Calu3 (cell line): ENCODE measurements at regions of chr1 and their contacts with region 1.

Region 1: DNA sequence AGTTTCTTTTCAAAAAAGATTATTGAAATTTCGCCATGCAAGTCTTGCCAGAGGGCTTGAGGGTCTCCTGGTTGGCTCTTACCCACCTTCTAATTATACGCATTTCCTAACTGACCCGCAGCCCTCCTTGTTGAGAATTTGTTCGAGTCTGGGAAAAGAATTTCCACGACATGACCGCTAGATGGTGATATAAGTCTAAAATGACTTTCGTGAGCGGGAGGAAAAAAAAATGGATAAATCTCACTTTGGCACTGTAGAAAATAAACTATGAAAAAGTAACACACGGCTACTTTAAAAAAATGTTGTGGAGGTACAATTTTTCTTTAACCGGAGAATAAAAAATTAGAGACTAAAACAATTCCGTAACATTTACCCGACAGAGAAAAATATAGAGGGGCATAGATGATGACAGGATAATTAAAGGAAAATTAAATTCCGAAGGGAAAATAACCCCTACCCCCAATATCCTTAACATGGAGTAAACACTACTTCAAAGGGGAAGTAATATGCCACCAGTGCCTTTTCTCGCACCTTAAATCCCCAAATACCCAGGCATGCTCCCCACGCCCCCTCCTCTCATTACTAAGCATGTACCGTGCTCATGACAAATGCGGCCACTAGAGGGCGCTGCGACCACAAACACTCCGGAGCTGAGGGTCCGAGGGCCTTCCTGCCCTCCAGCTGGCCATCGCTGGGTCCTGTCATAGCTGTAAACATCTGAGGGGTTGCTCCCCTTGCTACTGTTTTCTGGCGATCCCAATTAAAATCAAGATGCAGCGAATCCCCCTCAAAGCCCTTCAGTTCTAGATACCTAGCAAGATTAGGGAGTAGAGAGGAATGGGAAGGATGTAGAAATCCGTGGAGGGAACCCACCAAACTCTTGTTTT is 266.9 kb downstream of the ASTN1 start:
- DNase-seq: peak; percentile 63
- H3K4me3 Mint-ChIP-seq: peak overlapping the region; percentile 3
- H3K27ac Mint-ChIP-seq: no peak overlapping the region
- H3K4me1 Mint-ChIP-seq: peaks cover 10% of the 10 kb centered on the region
- H3K27me3 Mint-ChIP-seq: peaks cover 86% of the 10 kb centered on the region
- CTCF ChIP-seq: peak; percentile 97

Region 2: DNA sequence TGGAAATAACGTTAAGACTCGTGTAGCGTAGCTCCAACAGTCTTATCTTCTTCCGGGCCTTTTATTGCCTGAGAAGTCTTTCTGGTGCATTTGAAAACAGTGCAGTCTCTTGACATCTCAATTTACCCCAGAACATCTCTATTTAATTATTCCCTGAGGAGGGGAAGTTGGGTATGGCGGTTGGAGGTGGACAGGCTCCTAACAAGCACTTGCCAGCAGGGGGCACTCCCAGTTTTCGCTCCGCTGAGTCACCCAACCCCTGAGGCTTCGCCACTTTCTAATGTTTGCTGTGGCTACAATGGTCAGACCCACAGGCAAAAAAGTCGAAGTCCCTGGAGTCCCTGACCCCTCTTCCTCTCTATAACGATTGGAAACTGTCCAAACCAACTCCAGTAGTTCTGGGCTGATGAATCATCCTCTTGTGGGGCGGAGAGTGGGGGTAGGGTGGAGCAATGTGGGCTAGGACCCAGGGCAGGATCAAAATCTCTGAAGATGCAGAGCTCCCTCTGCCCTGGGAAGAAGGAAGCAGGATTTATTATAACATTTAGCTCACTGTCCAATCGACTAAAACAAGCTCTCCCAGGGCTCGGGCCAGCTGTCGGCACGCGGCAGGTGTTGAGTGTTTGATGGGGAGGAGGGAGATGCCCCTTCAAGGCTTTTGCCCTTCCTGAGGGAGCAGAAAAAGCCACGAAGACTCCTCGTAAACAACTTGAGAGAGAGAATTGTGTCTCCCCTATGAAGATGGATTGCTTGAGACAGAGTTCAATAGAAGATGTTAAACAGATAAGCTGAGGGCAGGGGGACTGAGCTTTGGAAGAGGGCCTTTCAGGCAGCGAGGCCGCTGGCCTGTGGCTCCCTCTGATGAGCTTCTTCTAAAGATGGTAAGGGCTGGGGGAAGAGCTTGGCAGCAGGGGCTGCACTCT is 358.8 kb after region 1 on chr1:
- CTCF ChIA-PET with region 1: interaction called, 3 read pairs
- intact Hi-C with region 1: loop called (anchors 2 kb)
- DNase-seq: peak; percentile 92
- H3K4me3 Mint-ChIP-seq: peak overlapping the region; percentile 28
- H3K27ac Mint-ChIP-seq: peak overlapping the region; percentile 45
- H3K4me1 Mint-ChIP-seq: peaks cover 34% of the 10 kb centered on the region
- H3K27me3 Mint-ChIP-seq: no peaks in the 10 kb centered on the region
- CTCF ChIP-seq: peak; percentile 92

Region 3: DNA sequence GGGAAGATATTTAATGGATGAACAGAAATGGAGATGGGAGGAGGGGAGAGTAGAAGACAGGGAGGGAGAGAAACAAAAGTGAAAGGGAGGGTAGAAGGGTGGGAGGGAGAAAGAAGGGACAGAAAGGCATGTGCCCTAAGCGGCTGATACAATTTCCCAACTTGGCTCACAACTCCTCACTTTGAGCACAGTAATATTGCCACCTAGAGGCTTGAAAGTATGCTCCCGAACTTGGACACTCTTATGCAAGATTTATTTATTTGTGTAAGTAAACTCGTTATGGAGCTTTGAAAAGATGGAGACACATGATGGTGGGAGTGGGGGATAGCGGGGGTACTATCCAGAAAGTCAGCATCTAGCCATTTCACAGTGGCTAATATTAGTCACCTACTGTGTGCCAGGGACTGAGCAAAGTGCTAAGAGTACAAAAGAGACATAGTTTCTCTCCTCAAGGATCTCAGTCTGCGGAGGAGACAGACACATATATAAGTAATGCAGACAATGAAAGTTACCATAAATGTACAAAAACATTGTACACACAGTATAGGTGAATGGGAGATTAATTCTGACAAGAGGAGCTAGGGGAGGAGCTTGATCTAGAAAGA is 882.6 kb after region 1 on chr1:
- CTCF ChIA-PET with region 1: no interaction called
- intact Hi-C with region 1: loop called (anchors 1 kb)
- DNase-seq: peak; percentile 23
- H3K4me3 Mint-ChIP-seq: no peak overlapping the region
- H3K27ac Mint-ChIP-seq: no peak overlapping the region
- H3K4me1 Mint-ChIP-seq: no peaks in the 10 kb centered on the region
- H3K27me3 Mint-ChIP-seq: peaks cover 64% of the 10 kb centered on the region
- CTCF ChIP-seq: peak; percentile 52

Region 4: GRCh38 chr1:177928194-177928593 is 1030.6 kb after region 1 on chr1:
- CTCF ChIA-PET with region 1: no interaction called
- intact Hi-C with region 1: loop called (anchors 5 kb)
- DNase-seq: no peak
- H3K4me3 Mint-ChIP-seq: no peak overlapping the region
- H3K27ac Mint-ChIP-seq: no peak overlapping the region
- H3K4me1 Mint-ChIP-seq: peaks cover 20% of the 10 kb centered on the region
- H3K27me3 Mint-ChIP-seq: no peaks in the 10 kb centered on the region
- CTCF ChIP-seq: no peak